ENCODE measurements at regions of chr4 and their contacts with region 1.

Region 1: DNA sequence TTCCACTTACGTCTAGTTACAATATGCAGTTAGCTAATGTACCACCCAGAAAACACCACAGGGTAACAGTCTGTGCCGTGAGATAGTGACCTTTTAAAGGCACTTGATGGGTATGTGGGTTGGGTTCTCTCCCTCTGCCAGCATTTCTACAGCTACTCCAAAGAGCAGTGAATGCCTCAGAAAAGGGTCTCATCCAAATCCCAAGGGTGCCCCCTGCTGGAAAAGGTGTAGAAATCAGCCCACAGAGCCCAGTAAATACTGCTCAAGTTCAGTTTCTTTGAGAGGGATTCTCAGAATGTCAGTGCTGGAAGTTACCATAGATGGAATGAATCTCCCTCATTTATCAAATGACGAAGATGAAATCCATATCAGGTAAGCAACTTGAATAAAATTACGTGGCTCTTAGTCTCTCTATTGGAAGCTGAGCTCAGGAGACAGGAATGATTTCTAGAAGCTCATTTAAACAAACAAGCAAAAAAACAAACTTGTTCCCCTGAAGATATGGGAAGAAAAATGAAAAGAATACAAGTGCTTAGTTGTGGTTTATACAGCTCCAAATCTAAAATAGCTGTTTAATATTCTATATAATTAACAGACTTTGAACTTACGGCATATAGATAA is 9.5 kb downstream of the RNF175 start:
- DNase-seq: peak; percentile 58
- ATAC-seq: peak; percentile 90
- H3K4me3 ChIP-seq: no peak overlapping the region
- H3K27ac ChIP-seq: no peak overlapping the region
- H3K4me1 ChIP-seq: no peaks in the 10 kb centered on the region
- H3K27me3 ChIP-seq: no peaks in the 10 kb centered on the region; the same call in 1 of the 2 replicates
- CTCF ChIP-seq: peak; percentile 69
- POLR2A ChIP-seq: no peak
- RAD21 ChIP-seq: peak; percentile 63

Region 2: GRCh38 chr4:153398713-153399112 is 351.6 kb before region 1 on chr4:
- CTCF ChIA-PET with region 1: no interaction called
- POLR2A ChIA-PET with region 1: no interaction called
- dilution Hi-C with region 1: no loop called
- in situ Hi-C with region 1: no loop called
- intact Hi-C with region 1: loop called (anchors 5 kb)
- DNase-seq: no peak
- ATAC-seq: no peak
- H3K4me3 ChIP-seq: no peak overlapping the region
- H3K27ac ChIP-seq: no peak overlapping the region
- H3K4me1 ChIP-seq: no peaks in the 10 kb centered on the region
- H3K27me3 ChIP-seq: no peaks in the 10 kb centered on the region
- CTCF ChIP-seq: no peak
- POLR2A ChIP-seq: no peak
- RAD21 ChIP-seq: no peak

Region 3: DNA sequence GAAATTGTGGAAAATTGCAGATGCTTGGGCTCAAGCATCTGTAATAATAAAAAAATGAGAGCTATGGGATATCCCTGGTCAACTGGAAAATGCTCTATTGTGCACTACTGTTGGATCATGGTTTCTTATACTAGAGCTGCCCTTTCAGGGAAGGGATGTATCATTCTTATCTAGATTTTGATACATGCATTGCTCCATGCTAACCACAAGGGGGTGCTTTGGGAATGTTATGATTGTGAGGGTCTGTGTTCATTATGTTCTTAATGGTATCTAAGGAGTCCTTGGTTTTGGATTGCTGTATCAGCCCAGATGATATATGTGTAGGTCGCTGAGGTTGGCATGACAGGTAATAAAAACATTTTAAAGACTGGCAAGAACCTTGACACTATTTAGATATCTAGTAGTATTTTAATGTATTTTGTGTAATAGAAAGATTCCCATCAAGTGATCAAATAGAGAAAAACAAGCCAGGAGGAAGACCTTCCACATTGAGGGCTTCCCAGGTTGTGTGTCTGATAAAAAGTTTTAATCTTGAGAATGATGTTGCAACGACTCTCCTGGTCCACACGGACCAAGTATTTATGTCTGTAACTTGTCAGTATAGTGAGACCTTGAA is 115.5 kb before region 1 on chr4:
- CTCF ChIA-PET with region 1: no interaction called
- POLR2A ChIA-PET with region 1: no interaction called
- dilution Hi-C with region 1: no loop called
- in situ Hi-C with region 1: no loop called
- intact Hi-C with region 1: loop called (anchors 1 kb)
- DNase-seq: peak; percentile 8
- ATAC-seq: peak; percentile 51; the same call in 1 of the 2 replicates
- H3K4me3 ChIP-seq: no peak overlapping the region
- H3K27ac ChIP-seq: no peak overlapping the region
- H3K4me1 ChIP-seq: no peaks in the 10 kb centered on the region
- H3K27me3 ChIP-seq: no peaks in the 10 kb centered on the region
- CTCF ChIP-seq: peak; percentile 49
- POLR2A ChIP-seq: no peak
- RAD21 ChIP-seq: peak; percentile 32

Region 4: GRCh38 chr4:153649572-153649991 is 100.7 kb before region 1 on chr4:
- CTCF ChIA-PET with region 1: no interaction called
- POLR2A ChIA-PET with region 1: no interaction called
- dilution Hi-C with region 1: no loop called
- in situ Hi-C with region 1: no loop called
- intact Hi-C with region 1: loop called (anchors 5 kb)
- DNase-seq: peak; percentile 42
- ATAC-seq: peak; percentile 55
- H3K4me3 ChIP-seq: no peak overlapping the region
- H3K27ac ChIP-seq: no peak overlapping the region
- H3K4me1 ChIP-seq: no peaks in the 10 kb centered on the region
- H3K27me3 ChIP-seq: no peaks in the 10 kb centered on the region; the same call in 1 of the 2 replicates
- CTCF ChIP-seq: peak; percentile 49
- POLR2A ChIP-seq: no peak
- RAD21 ChIP-seq: peak; percentile 47

Measured in IMR-90 (cell line).